Activated T-helper 1 cell treated with anti-CD3 and anti-CD28 coated beads, Interleukin-12 subunit alpha, Interleukin-12 subunit beta, Interleukin-2, Interleukin-4 antibody, amounts not matched to agents 30 ng/mL and 10 ng/mL and 1 ng/mL, durations not matched to agents 14 hours and 24 hours and 36 hours (primary cell): ENCODE measurements at regions of chr6 and their contacts with region 1.

Region 1: DNA sequence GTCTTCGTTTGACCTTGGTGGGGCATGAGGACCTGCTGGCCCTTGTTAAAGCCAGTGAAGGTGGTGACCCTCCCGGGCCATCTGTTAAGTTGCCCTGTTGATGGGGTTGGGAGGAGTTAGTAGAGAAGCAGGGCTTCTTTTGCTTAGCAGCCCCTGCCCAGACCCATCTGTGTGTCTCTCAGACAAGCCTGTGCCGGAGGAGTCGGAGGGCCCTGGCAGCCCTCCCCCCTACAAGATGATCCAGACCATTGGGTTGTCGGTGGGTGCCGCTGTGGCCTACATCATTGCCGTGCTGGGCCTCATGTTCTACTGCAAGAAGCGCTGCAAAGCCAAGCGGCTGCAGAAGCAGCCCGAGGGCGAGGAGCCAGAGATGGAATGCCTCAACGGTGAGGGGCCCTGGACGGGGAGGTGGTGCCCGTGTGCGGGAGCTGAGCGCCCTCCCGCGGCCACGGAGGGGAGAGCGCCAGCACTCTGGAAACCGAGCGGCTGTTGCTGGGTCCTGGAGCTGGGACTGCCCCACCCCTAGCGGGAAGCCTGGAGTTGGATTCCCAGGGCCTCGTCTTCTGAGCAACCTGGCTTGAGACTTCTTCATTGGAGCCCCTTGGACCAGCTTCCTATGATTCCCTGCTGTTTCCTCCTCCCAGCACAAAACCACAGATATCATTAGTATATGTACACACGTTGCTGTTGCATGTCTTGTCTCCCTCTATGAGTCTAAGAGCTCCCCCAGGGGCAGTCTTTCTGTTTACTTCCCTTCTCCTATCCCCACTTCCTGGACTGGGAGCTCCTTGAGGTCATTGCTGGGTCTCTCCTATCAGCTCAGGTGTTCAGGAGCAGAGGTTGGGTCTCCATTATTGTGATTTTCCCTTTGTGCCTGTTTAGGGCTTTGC is 27.6 kb upstream of the SRF start:
- DNase-seq: peak; percentile 63
- H3K4me3 Mint-ChIP-seq: no peak overlapping the region
- H3K27ac Mint-ChIP-seq: peak overlapping the region; percentile 14
- H3K4me1 Mint-ChIP-seq: no peaks in the 10 kb centered on the region
- H3K27me3 Mint-ChIP-seq: no peaks in the 10 kb centered on the region

Region 2: DNA sequence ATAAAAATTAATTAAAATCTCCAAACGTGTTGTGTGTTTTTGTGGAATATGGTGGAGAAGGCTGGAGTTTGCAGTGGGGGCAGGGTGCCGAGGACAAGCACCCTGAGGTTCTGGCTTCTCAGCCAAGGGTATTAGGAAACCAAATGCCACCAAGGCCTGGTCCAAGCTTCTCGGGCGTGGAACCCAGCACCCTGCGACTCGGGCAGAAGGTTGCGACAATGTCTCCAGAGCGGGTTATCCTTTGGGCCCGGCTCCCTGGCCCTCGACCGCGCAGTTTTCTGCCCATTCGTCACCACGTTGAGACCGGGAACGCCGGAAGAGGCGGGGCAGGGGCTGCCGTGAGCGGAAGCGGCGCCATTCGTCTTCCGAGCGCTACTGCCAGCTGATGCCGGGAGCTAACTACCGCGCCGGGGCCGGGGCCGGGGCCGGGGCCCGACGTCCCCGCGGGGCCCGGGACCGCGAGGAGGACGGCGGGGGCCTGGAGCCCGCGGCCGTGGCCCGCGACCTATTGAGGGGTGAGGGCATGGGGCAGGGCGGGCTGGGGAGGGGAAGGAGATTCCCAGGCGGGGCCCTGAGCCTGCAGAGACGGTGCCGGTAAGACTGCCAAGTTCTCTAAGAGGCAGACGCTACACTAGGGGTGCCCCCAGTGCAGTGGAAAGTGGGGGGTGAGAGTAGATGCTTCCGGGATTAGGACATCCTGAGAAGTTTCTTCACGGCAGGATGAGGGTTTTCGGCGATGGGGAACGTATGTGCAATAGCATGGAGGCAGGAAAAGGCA is 122.0 kb before region 1 on chr6 and contains the start of gene RRP36:
- intact Hi-C with region 1: no loop called
- DNase-seq: peak; percentile 64
- H3K4me3 Mint-ChIP-seq: peak within 1 kb of the TSS; percentile 98
- H3K27ac Mint-ChIP-seq: peak within 1 kb of the TSS; percentile 87
- H3K4me1 Mint-ChIP-seq: peaks cover 34% of the 10 kb centered on the region
- H3K27me3 Mint-ChIP-seq: no peaks in the 10 kb centered on the region
- total RNA-seq, gene RRP36: 86.1 and 89.9 TPM in 2 replicates

Region 3: GRCh38 chr6:43070028-43070632 is 73.3 kb before region 1 on chr6:
- intact Hi-C with region 1: loop called (anchors 1 kb)
- DNase-seq: no peak
- H3K4me3 Mint-ChIP-seq: no peak overlapping the region
- H3K27ac Mint-ChIP-seq: no peak overlapping the region
- H3K4me1 Mint-ChIP-seq: peaks cover 6% of the 10 kb centered on the region
- H3K27me3 Mint-ChIP-seq: no peaks in the 10 kb centered on the region

Region 4: DNA sequence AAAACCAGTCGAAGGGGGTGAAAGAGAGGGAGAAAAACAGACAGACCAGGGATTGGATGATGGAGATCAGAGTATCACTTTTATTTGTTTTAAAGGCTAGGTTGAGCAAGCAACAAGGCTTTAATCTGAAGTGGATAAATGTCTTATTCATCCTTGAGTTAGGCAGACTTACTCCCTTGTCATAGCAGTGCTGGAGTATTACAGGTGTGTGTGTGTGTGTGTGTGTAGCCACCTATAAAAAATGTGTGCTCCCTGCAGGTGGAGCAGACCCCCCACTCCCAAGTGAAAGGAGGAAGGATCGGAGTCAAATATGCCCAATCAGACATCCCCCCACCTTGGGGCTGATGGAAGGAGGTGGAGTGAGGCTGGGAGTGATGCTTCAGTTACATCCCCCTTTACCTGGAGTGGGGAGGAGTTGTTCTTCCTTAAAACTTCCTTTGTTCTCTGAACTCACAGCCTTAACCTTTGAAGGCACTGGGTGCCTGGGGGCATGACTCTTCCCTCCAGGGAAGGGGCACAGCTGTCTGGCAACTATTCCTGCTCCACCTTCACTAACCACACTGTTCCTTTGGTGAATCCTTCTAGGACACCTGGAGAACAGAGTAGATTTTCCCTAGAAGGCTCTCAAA is 40.1 kb before region 1 on chr6:
- intact Hi-C with region 1: loop called (anchors 5 kb)
- DNase-seq: no peak
- H3K4me3 Mint-ChIP-seq: no peak overlapping the region
- H3K27ac Mint-ChIP-seq: no peak overlapping the region
- H3K4me1 Mint-ChIP-seq: no peaks in the 10 kb centered on the region
- H3K27me3 Mint-ChIP-seq: peaks cover 10% of the 10 kb centered on the region